T-cell (primary cell): ENCODE measurements at regions of chr5 and their contacts with region 1.

Region 1: DNA sequence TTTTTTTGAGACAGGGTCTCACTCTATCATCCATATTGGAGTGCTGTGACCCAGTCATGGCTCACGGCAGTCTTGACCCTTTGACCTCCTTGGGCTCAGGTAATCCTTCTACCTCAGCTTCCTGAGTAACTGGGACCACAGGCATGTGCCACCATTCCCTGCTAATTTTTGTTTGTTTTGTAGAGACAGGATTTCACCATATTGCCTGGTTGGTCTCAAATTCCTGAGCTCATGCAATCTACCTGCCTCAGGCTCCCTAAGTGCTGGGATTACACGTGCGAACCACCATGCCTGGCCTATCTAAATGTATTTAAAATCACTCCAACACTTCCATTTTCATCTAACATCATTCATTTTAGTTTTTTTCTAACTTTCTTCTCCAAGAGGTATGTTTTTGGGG is 190.5 kb upstream of the CHD1 start:
- DNase-seq: no peak
- ATAC-seq: no peak
- H3K4me3 ChIP-seq: no peak overlapping the region
- H3K4me3 Mint-ChIP-seq: no peak overlapping the region
- H3K27ac ChIP-seq: no peak overlapping the region
- H3K27ac Mint-ChIP-seq: no peak overlapping the region
- H3K4me1 ChIP-seq: no peaks in the 10 kb centered on the region
- H3K4me1 Mint-ChIP-seq: no peaks in the 10 kb centered on the region
- H3K27me3 ChIP-seq: no peaks in the 10 kb centered on the region
- H3K27me3 Mint-ChIP-seq: peaks cover 3 to 4% of the 10 kb centered on the region in 2 donors

Region 2: GRCh38 chr5:99104538-99105132 is 14.7 kb before region 1 on chr5:
- CTCF ChIA-PET with region 1: interaction called, 4 to 13 read pairs
- POLR2A ChIA-PET with region 1: interaction called in 1 of 2 experiments, 3 read pairs
- DNase-seq: peak in 1 of 35 experiments; percentile 50
- ATAC-seq: no peak
- H3K4me3 ChIP-seq: no peak overlapping the region
- H3K4me3 Mint-ChIP-seq: no peak overlapping the region
- H3K27ac ChIP-seq: no peak overlapping the region
- H3K27ac Mint-ChIP-seq: no peak overlapping the region
- H3K4me1 ChIP-seq: no peaks in the 10 kb centered on the region
- H3K4me1 Mint-ChIP-seq: peaks cover 0 to 2% (median 1%) of the 10 kb centered on the region in 3 donors
- H3K27me3 ChIP-seq: peaks cover 0 to 6% of the 10 kb centered on the region in 2 experiments
- H3K27me3 Mint-ChIP-seq: peaks cover 0 to 8% of the 10 kb centered on the region in 2 donors